ENCODE measurements at regions of chr9 and their contacts with region 1.

Region 1: GRCh38 chr9:111597817-111598729 is 1.4 kb downstream of the PTGR1 start:
- DNase-seq: peak; percentile 40 to 77 (median 65)
- ATAC-seq: peak; percentile 82
- H3K4me3 ChIP-seq: peak overlapping the region; percentile 33
- H3K4me3 Mint-ChIP-seq: peak overlapping the region; percentile 77 to 94 (median 89)
- H3K27ac ChIP-seq: no peak overlapping the region
- H3K27ac Mint-ChIP-seq: peak overlapping the region in 4 of 9 donors; percentile 2 to 62 (median 42)
- H3K4me1 ChIP-seq: peaks cover 12 to 15% of the 10 kb centered on the region in 2 donors
- H3K4me1 Mint-ChIP-seq: peaks cover 13 to 29% (median 24%) of the 10 kb centered on the region in 7 donors
- H3K27me3 ChIP-seq: peaks cover 0 to 9% of the 10 kb centered on the region in 2 donors
- H3K27me3 Mint-ChIP-seq: peaks cover 17 to 42% (median 29%) of the 10 kb centered on the region in 5 donors

Region 2: DNA sequence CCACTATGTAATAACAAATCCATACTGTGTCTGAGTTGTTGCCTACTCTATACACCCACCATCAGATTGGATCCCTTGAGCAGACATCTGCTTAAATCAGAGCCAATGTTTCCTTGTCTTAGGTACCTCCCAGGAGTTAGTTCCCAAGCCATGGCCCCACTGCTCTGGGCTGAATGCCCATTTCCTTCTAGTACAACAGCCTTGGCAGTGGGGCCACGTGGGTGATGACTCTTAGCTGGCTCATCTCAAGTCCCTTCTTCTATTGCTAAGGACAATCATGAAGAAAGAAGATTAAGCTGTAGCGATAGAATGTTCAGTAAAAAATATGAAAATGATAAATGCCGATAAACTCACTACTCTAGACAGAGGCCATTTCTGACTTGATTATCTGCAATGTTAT is 15.2 kb before region 1 on chr9:
- CTCF ChIA-PET with region 1: no interaction called
- POLR2A ChIA-PET with region 1: no interaction called
- intact Hi-C with region 1: no loop called
- DNase-seq: no peak
- ATAC-seq: no peak
- H3K4me3 ChIP-seq: no peak overlapping the region
- H3K4me3 Mint-ChIP-seq: no peak overlapping the region
- H3K27ac ChIP-seq: no peak overlapping the region
- H3K27ac Mint-ChIP-seq: no peak overlapping the region
- H3K4me1 ChIP-seq: no peaks in the 10 kb centered on the region
- H3K4me1 Mint-ChIP-seq: no peaks in the 10 kb centered on the region
- H3K27me3 ChIP-seq: no peaks in the 10 kb centered on the region
- H3K27me3 Mint-ChIP-seq: peaks cover 0 to 9% (median 3%) of the 10 kb centered on the region in 5 donors

Region 3: DNA sequence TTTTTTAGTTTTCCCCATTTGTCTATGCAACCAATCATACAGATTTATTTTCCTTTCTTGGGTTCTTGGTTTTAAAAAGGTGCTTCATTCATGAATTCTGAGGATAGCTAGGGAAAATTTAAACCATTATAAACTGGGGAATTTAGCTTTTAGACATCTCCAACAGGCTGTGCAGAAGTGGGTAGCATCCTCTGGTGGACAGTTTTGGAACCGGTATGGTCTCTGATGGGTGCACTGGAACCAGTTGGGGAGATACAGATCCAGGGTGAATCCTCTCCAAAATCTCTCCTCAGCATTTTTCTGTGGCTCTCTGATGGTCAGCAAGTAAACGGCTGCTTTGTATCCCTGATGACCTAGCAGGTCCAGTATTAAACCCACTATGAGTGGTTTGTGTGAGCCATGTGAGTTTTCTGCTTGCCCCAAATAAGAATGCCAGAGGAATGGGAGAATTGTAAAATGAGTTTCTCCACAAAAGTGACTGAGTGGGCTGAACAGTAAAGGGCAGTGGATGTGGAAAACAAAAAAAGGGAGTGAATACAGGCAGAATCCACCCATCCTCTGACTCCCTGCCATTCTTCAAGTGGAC is 23.9 kb after region 1 on chr9:
- CTCF ChIA-PET with region 1: interaction called, 5 read pairs
- POLR2A ChIA-PET with region 1: no interaction called
- intact Hi-C with region 1: loop called (anchors 1 to 2 kb)
- DNase-seq: peak in 3 of 9 donors; percentile 12 to 21 (median 14)
- ATAC-seq: peak; percentile 65
- H3K4me3 ChIP-seq: no peak overlapping the region
- H3K4me3 Mint-ChIP-seq: no peak overlapping the region
- H3K27ac ChIP-seq: no peak overlapping the region
- H3K27ac Mint-ChIP-seq: no peak overlapping the region
- H3K4me1 ChIP-seq: no peaks in the 10 kb centered on the region
- H3K4me1 Mint-ChIP-seq: no peaks in the 10 kb centered on the region
- H3K27me3 ChIP-seq: no peaks in the 10 kb centered on the region
- H3K27me3 Mint-ChIP-seq: peaks cover 3 to 24% (median 5%) of the 10 kb centered on the region in 5 donors

Region 4: DNA sequence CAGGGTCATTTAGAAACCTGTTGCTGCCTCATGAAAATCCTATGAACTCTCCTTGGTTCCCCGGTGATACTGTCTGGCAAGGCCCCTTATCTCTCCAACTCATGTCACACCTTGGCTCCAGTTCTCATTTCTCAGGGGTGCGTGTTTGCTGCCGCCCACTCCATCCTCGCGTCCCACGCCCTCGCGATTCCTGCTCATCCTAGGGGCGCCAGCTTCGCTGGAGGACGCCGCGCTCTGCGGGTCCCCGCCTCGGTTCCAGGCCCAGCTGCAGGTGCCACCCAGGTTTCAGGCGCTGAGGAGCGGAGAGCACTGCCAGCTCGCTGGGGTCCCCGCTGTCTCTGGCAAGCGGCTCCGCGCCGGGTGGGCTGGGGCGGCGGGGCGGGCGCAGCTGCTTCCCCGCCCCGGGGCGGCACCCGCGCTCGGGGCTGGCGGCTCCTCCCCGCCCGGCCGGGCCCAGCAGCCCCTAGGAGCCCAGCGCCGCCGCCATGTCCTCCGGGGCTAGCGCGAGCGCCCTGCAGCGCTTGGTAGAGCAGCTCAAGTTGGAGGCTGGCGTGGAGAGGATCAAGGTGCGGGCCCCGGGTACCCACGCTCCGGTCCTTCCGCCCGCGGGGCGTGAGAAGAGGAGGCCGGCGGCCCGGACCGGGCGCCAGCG is 63.2 kb after region 1 on chr9 and contains the start of gene GNG10:
- CTCF ChIA-PET with region 1: no interaction called
- POLR2A ChIA-PET with region 1: interaction called, 3 read pairs
- intact Hi-C with region 1: loop called (anchors 1 to 2 kb)
- DNase-seq: peak; percentile 57 to 79 (median 68)
- ATAC-seq: peak; percentile 95
- H3K4me3 ChIP-seq: peak within 1 kb of the TSS; percentile 70
- H3K4me3 Mint-ChIP-seq: peak within 1 kb of the TSS; percentile 87 to 97 (median 93)
- H3K27ac ChIP-seq: peak within 1 kb of the TSS; percentile 71
- H3K27ac Mint-ChIP-seq: peak within 1 kb of the TSS; percentile 82 to 97 (median 92)
- H3K4me1 ChIP-seq: peaks cover 18 to 31% of the 10 kb centered on the region in 2 donors
- H3K4me1 Mint-ChIP-seq: peaks cover 16 to 44% (median 32%) of the 10 kb centered on the region in 7 donors
- H3K27me3 ChIP-seq: no peaks in the 10 kb centered on the region
- H3K27me3 Mint-ChIP-seq: no peaks in the 10 kb centered on the region
- total RNA-seq, gene GNG10: 5.3 to 26.1 (median 12.2) TPM

Region 5: DNA sequence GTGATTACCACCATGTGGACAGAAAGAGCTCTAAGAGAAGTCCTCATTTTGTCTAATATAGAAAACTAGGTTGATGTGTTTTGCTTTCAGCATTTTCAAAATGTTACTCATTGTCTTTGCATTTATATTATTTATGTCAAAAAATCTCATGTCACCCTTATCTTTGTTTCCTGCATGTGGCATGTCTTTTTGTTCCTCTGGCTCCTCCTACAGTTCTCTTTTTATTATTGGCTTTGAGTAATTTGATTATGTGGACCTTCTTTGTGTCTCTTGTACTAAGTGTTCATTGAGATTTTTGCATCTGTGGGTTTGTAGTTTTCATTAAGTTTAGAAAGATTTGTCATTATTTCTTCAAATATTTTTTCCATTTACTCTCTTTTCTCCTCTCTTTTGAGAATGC is 122.1 kb after region 1 on chr9:
- CTCF ChIA-PET with region 1: interaction called, 3 read pairs
- POLR2A ChIA-PET with region 1: no interaction called
- intact Hi-C with region 1: loop called in 1 of 2 experiments (anchors 1 kb)
- DNase-seq: no peak
- ATAC-seq: no peak
- H3K4me3 ChIP-seq: no peak overlapping the region
- H3K4me3 Mint-ChIP-seq: no peak overlapping the region
- H3K27ac ChIP-seq: no peak overlapping the region
- H3K27ac Mint-ChIP-seq: no peak overlapping the region
- H3K4me1 ChIP-seq: no peaks in the 10 kb centered on the region
- H3K4me1 Mint-ChIP-seq: peaks cover 0 to 1% (median 0%) of the 10 kb centered on the region in 7 donors
- H3K27me3 ChIP-seq: no peaks in the 10 kb centered on the region
- H3K27me3 Mint-ChIP-seq: no peaks in the 10 kb centered on the region

Region 6: GRCh38 chr9:111926421-111926875 is 328.4 kb after region 1 on chr9:
- CTCF ChIA-PET with region 1: no interaction called
- POLR2A ChIA-PET with region 1: no interaction called
- intact Hi-C with region 1: loop called in 1 of 2 experiments (anchors 1 kb)
- DNase-seq: peak in 7 of 9 donors; percentile 75 to 86 (median 82)
- ATAC-seq: peak; percentile 98
- H3K4me3 ChIP-seq: no peak overlapping the region
- H3K4me3 Mint-ChIP-seq: peak overlapping the region; percentile 61 to 79 (median 72)
- H3K27ac ChIP-seq: peak overlapping the region; percentile 23
- H3K27ac Mint-ChIP-seq: peak overlapping the region; percentile 79 to 94 (median 91)
- H3K4me1 ChIP-seq: peaks cover 29 to 35% of the 10 kb centered on the region in 2 donors
- H3K4me1 Mint-ChIP-seq: peaks cover 21 to 67% (median 50%) of the 10 kb centered on the region in 7 donors
- H3K27me3 ChIP-seq: no peaks in the 10 kb centered on the region
- H3K27me3 Mint-ChIP-seq: no peaks in the 10 kb centered on the region

Region 7: DNA sequence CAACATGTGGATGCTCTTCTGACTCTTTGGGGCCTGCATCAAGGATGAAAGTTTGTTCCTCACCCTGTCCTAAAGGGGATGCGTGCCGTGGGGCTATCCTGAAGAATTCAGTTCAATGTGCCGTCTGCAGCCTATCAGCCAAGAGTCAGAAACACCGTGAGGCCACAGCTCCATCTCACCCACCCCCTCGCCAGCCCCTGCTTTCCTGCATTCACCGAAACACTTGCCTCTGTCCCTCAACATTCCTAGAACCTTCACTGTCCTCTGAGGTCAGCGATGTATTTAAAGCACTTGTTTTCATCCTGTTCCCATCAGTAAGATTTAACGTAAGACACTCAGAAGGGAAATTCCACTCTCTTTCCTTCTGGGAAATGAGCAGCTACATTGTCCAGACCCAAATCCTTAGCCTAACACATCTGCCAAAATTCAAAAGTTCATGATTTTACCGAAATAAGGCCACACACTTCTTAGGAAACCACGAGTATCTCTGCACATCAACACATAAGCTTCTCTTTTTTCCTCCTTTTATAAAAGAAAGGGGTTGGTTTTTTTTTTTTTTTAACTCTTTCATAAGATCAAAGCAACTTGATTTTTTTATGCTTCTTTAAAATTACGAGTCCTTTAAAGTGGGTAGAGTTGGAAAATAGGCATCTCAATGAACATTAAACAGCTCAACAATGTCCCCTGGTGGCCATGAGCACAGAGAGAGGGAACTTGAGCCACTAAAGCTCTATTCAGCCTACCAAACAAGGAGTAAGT is 476.4 kb after region 1 on chr9:
- CTCF ChIA-PET with region 1: interaction called, 12 read pairs
- POLR2A ChIA-PET with region 1: no interaction called
- intact Hi-C with region 1: loop called (anchors 1 kb)
- DNase-seq: peak in 8 of 9 donors; percentile 53 to 81 (median 74)
- ATAC-seq: peak; percentile 90
- H3K4me3 ChIP-seq: no peak overlapping the region
- H3K4me3 Mint-ChIP-seq: peak overlapping the region in 9 of 10 donors; percentile 64 to 79 (median 72)
- H3K27ac ChIP-seq: no peak overlapping the region
- H3K27ac Mint-ChIP-seq: peak overlapping the region in 8 of 9 donors; percentile 6 to 85 (median 47)
- H3K4me1 ChIP-seq: peaks cover 3 to 16% of the 10 kb centered on the region in 2 donors
- H3K4me1 Mint-ChIP-seq: peaks cover 14 to 38% (median 28%) of the 10 kb centered on the region in 7 donors
- H3K27me3 ChIP-seq: no peaks in the 10 kb centered on the region
- H3K27me3 Mint-ChIP-seq: no peaks in the 10 kb centered on the region

Measured in naive thymus-derived CD4-positive, alpha-beta T cell (primary cell).